ENCODE measurements at regions of chr12 and their contacts with region 1.

Region 1: DNA sequence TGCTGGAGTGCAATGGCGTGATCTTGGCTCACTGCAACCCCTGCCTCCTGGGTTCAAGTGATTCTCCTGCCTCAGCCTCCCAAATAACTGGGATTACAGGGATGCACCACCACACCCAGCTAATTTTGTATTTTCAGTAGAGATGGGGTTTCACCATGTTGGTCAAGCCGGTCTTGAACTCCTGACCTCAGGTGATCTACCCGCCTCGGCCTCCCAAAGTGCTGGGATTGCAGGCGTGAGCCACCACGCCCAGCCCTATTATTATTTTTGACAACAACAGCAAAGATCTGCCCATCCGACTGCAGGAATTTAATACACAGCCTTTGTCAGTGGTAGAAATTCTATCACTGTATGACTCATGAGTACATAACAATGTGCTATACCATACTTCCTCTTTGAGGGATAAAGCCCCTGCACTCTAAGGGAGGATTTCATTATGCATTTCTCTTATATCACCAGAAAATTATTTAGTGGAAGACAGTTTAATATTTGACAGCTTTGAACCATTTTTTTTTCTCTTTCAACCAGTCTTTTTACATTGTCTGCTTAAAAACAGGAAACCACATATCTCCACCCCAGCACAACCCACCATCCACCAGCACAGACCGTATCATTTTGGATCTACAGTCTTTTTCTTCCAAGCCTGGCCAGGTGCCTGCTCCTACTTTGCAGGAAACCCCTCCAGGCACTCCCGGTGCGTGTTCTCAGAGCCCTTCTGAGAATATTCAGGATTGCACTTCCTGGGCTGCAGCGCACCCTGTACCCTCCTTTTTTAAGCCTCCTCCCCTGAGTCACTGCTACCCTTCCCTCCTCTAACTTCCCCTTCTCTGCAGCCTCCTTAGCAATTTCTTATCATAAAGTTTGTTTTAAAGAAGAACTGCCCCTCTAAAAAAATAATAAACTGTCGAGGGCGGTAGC is 594 bp downstream of the ARHGDIB start:
- DNase-seq: no peak
- ATAC-seq: peak; percentile 61
- H3K4me3 ChIP-seq: peak overlapping the region; percentile 80
- H3K27ac ChIP-seq: peak overlapping the region; percentile 94
- H3K4me1 ChIP-seq: peaks cover 5% of the 10 kb centered on the region
- H3K27me3 ChIP-seq: no peaks in the 10 kb centered on the region
- CTCF ChIP-seq: no peak
- EP300 ChIP-seq: peak; percentile 19 to 51; a peak in 1 of 4 replicates
- POLR2A ChIP-seq: no peak
- RAD21 ChIP-seq: no peak

Region 2: GRCh38 chr12:14384783-14385638 is 575.8 kb before region 1 on chr12:
- CTCF ChIA-PET with region 1: no interaction called
- POLR2A ChIA-PET with region 1: no interaction called
- RAD21 ChIA-PET with region 1: no interaction called
- SMC1A ChIA-PET with region 1: no interaction called
- in situ Hi-C with region 1: loop called (anchors 25 kb)
- intact Hi-C with region 1: loop called (anchors 5 kb)
- DNase-seq: peak; percentile 92
- ATAC-seq: peak; percentile 90
- H3K4me3 ChIP-seq: peak overlapping the region; percentile 18; the same call in 1 of the 2 replicates
- H3K27ac ChIP-seq: peak overlapping the region; percentile 63
- H3K4me1 ChIP-seq: peaks cover 5% of the 10 kb centered on the region
- H3K27me3 ChIP-seq: no peaks in the 10 kb centered on the region
- CTCF ChIP-seq: no peak
- EP300 ChIP-seq: no peak; a peak in 1 of 4 replicates
- POLR2A ChIP-seq: peak; percentile 46; the same call in 1 of the 2 replicates
- RAD21 ChIP-seq: no peak

Region 3: GRCh38 chr12:14923944-14924343 is 36.9 kb before region 1 on chr12:
- CTCF ChIA-PET with region 1: no interaction called
- POLR2A ChIA-PET with region 1: no interaction called
- RAD21 ChIA-PET with region 1: no interaction called
- SMC1A ChIA-PET with region 1: no interaction called
- in situ Hi-C with region 1: no loop called
- intact Hi-C with region 1: no loop called
- DNase-seq: no peak
- ATAC-seq: no peak
- H3K4me3 ChIP-seq: no peak overlapping the region
- H3K27ac ChIP-seq: no peak overlapping the region
- H3K4me1 ChIP-seq: no peaks in the 10 kb centered on the region
- H3K27me3 ChIP-seq: no peaks in the 10 kb centered on the region
- CTCF ChIP-seq: no peak
- EP300 ChIP-seq: no peak
- POLR2A ChIP-seq: no peak
- RAD21 ChIP-seq: no peak

Region 4: DNA sequence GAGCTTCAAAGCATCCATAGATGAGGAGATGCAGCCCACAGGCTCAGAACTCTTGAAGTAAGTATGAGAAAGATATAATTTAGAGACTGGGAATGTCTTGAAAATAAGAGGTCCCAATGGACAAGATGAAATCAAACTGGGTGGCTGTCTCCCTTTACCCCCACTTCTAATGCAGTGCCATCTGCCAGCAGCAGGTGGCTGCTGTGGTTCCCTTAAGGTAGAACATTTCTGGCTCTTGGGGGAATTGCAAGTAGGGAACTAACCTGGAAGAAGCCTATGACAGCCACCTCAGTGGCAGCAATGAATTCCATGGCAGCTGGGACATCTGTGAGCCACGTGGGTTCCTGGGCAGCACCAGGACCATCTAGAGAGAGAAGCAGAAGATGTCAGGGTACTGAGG is 23.1 kb before region 1 on chr12:
- CTCF ChIA-PET with region 1: interaction called, 15 read pairs
- POLR2A ChIA-PET with region 1: no interaction called
- RAD21 ChIA-PET with region 1: no interaction called
- SMC1A ChIA-PET with region 1: interaction called, 18 read pairs
- in situ Hi-C with region 1: no loop called
- intact Hi-C with region 1: no loop called
- DNase-seq: no peak
- ATAC-seq: peak; percentile 74
- H3K4me3 ChIP-seq: no peak overlapping the region
- H3K27ac ChIP-seq: no peak overlapping the region
- H3K4me1 ChIP-seq: no peaks in the 10 kb centered on the region; the same call in 1 of the 2 replicates
- H3K27me3 ChIP-seq: no peaks in the 10 kb centered on the region
- CTCF ChIP-seq: peak; percentile 34 to 43 (median 37); a peak in 5 of 6 replicates
- EP300 ChIP-seq: no peak
- POLR2A ChIP-seq: no peak
- RAD21 ChIP-seq: peak; percentile 52

Region 5: GRCh38 chr12:14981049-14981448 is 20.2 kb after region 1 on chr12:
- CTCF ChIA-PET with region 1: interaction called, 3 read pairs
- POLR2A ChIA-PET with region 1: interaction called, 4 read pairs
- RAD21 ChIA-PET with region 1: interaction called, 5 read pairs
- SMC1A ChIA-PET with region 1: interaction called, 14 read pairs
- in situ Hi-C with region 1: no loop called
- intact Hi-C with region 1: no loop called
- DNase-seq: no peak
- ATAC-seq: peak; percentile 81
- H3K4me3 ChIP-seq: no peak overlapping the region
- H3K27ac ChIP-seq: no peak overlapping the region
- H3K4me1 ChIP-seq: peaks cover 11% of the 10 kb centered on the region
- H3K27me3 ChIP-seq: no peaks in the 10 kb centered on the region
- CTCF ChIP-seq: no peak
- EP300 ChIP-seq: no peak
- POLR2A ChIP-seq: no peak
- RAD21 ChIP-seq: no peak

Region 6: GRCh38 chr12:14989790-14990189 is 29.0 kb after region 1 on chr12:
- CTCF ChIA-PET with region 1: interaction called, 5 read pairs
- POLR2A ChIA-PET with region 1: no interaction called
- RAD21 ChIA-PET with region 1: interaction called, 5 read pairs
- SMC1A ChIA-PET with region 1: interaction called, 11 read pairs
- in situ Hi-C with region 1: no loop called
- intact Hi-C with region 1: loop called (anchors 2 kb)
- DNase-seq: no peak
- ATAC-seq: peak; percentile 49
- H3K4me3 ChIP-seq: no peak overlapping the region
- H3K27ac ChIP-seq: peak overlapping the region; percentile 27
- H3K4me1 ChIP-seq: peaks cover 17% of the 10 kb centered on the region
- H3K27me3 ChIP-seq: no peaks in the 10 kb centered on the region
- CTCF ChIP-seq: no peak
- EP300 ChIP-seq: 0 out of 4 replicates have a peak, but pooled peaks of 1 of the 2 experiments have one; percentile 14
- POLR2A ChIP-seq: no peak
- RAD21 ChIP-seq: no peak

Region 7: GRCh38 chr12:15289192-15289591 is 328.4 kb after region 1 on chr12:
- CTCF ChIA-PET with region 1: no interaction called
- POLR2A ChIA-PET with region 1: no interaction called
- RAD21 ChIA-PET with region 1: no interaction called
- SMC1A ChIA-PET with region 1: no interaction called
- in situ Hi-C with region 1: no loop called
- intact Hi-C with region 1: no loop called
- DNase-seq: no peak
- ATAC-seq: no peak
- H3K4me3 ChIP-seq: no peak overlapping the region
- H3K27ac ChIP-seq: no peak overlapping the region
- H3K4me1 ChIP-seq: no peaks in the 10 kb centered on the region
- H3K27me3 ChIP-seq: no peaks in the 10 kb centered on the region; a peak in 2 of 4 replicates
- CTCF ChIP-seq: no peak
- EP300 ChIP-seq: no peak
- POLR2A ChIP-seq: no peak
- RAD21 ChIP-seq: no peak

Measured in GM12878 (cell line).